Activated CD8-positive, alpha-beta memory T cell treated with anti-CD3 and anti-CD28 coated beads, Interleukin-2, amount 10 ng/mL, durations not matched to agents 7 days and 5 days (primary cell): ENCODE measurements at regions of chr17 and their contacts with region 1.

Region 1: DNA sequence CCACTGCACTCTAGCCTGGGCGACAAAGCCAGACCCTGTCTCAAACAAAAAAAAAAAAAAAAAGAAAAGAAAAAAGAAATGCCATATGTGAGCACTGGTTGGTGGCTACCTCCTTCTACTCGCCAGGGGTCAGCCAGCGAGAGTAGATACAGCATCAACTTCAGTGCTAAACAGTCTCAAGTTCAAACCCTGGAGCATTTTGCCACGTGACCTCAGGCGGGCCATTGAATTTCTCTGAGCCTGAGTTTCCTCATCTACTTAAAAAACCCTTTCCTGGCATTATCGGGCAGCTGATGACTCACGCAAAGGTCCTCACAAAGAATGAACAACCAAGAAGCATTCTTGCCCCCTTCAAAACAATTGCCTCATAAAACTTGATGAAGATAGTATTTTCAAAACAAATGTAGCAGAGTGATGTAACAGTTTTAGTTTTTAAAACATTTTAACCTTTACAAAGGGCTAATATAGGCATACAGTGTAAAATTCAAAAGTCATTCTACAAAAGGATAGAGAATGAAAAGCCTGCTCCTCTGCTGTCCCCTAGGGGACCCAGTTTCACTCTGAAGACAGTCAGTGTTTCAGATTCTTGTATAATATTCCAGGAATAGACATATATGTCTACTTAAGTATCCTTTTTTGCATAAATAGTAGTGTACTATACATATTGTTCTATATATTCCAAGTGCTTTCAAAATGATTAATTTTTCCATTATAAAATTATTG is 28.4 kb downstream of the DNAH2 start:
- DNase-seq: no peak
- ATAC-seq: no peak
- H3K4me3 Mint-ChIP-seq: no peak overlapping the region
- H3K27ac Mint-ChIP-seq: no peak overlapping the region
- H3K4me1 Mint-ChIP-seq: no peaks in the 10 kb centered on the region
- H3K27me3 Mint-ChIP-seq: peaks cover 30% of the 10 kb centered on the region

Region 2: GRCh38 chr17:7782237-7782636 is 36.3 kb after region 1 on chr17:
- CTCF ChIA-PET with region 1: interaction called, 13 read pairs
- DNase-seq: no peak
- ATAC-seq: no peak
- H3K4me3 Mint-ChIP-seq: no peak overlapping the region
- H3K27ac Mint-ChIP-seq: no peak overlapping the region
- H3K4me1 Mint-ChIP-seq: no peaks in the 10 kb centered on the region
- H3K27me3 Mint-ChIP-seq: peaks cover 5% of the 10 kb centered on the region

Region 3: GRCh38 chr17:7844292-7845154 is 98.6 kb after region 1 on chr17:
- CTCF ChIA-PET with region 1: interaction called, 12 read pairs
- DNase-seq: peak; percentile 93
- ATAC-seq: peak; percentile 73
- H3K4me3 Mint-ChIP-seq: peak overlapping the region; percentile 80
- H3K27ac Mint-ChIP-seq: peak overlapping the region; percentile 99
- H3K4me1 Mint-ChIP-seq: peaks cover 34% of the 10 kb centered on the region
- H3K27me3 Mint-ChIP-seq: no peaks in the 10 kb centered on the region

Region 4: DNA sequence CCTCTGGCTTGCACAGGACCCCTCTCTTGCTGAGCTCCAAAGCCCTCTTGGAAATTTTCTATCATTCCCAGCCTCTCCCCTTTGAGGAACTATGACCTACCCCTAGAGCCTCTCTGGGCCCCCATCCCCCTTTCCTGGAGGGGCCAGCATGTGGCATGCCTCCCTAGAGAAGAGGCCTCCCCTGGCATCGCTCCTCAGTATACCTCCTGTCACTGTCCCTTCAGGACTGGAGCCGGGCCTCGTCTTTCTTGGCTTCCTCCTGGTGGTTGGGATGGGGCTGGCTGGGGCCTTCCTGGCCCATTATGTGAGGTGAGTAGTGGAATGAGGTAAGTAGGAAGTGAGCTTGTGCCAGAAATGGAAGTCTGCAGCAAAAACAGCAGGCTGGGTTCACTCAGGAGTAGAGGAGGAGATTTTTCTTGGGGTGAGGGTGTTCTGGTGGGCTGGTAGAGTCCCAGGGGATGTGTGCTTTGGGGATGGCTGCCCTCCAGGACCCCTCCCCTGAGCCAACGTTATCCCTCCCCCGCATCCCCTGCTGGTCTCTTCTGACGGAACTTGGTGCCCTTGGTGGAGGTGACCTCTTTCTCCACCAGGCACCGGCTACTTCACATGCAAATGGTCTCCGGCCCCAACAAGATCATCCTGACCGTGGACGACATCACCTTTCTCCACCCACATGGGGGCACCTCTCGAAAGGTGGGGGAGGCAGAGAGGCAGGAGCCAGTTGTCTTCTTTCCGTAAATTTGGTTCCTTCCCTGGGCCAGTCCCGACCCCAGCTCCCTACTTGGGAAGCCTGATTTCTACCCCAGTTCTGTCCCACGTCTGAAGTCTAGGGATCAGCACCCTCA is 261.1 kb after region 1 on chr17:
- CTCF ChIA-PET with region 1: no interaction called
- DNase-seq: no peak
- ATAC-seq: no peak
- H3K4me3 Mint-ChIP-seq: no peak overlapping the region
- H3K27ac Mint-ChIP-seq: no peak overlapping the region
- H3K4me1 Mint-ChIP-seq: peaks cover 3% of the 10 kb centered on the region
- H3K27me3 Mint-ChIP-seq: peaks cover 33% of the 10 kb centered on the region